HepG2 (cell line): ENCODE measurements at regions of chr1 and their contacts with region 1.

Region 1: DNA sequence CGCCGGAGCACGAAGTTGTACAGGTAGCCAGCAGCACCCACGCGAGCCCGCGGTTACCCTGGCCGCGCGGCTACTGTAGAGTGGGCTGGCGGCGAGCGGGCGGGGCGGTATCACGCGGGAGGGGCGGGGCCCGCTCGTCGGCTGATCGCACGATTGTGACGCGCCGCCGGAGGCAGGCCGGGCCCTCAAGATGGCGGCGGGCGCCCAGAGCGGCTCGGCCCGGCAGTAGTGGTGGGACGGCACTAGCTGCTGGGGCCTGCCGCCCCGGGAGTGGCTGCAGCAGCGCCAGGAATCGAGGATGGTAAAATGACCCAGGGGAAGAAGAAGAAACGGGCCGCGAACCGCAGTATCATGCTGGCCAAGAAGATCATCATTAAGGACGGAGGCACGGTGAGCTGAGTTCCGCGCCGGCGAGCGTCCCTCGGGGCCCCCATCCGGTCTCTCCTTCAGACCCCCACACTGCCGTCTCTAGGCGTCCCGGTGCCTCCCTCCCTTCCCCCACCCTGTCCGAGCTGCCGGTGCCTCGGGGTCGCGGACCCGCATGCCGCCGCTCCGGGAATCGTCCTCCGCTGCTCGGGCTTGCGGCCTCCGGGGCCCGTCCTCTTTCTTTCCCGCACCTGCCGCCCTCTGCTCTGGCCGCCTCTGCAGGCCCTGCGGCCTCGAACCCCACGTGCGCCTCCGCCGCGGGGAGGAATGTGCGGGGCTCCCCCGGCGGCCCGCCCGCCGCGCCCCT is 68.3 kb downstream of the SLC35A3 start:
- DNase-seq: peak; percentile 57
- ATAC-seq: peak; percentile 93
- H3K4me3 ChIP-seq: peak overlapping the region; percentile 91 to 99 (median 97)
- H3K27ac ChIP-seq: peak overlapping the region; percentile 94
- H3K4me1 ChIP-seq: peaks cover 58% of the 10 kb centered on the region
- H3K27me3 ChIP-seq: no peaks in the 10 kb centered on the region; a peak in 1 of 5 replicates
- CTCF ChIP-seq: no peak
- EP300 ChIP-seq: peak in 1 of 2 experiments; percentile 6; a peak in 1 of 4 replicates
- POLR2A ChIP-seq: peak; percentile 94 to 97
- RAD21 ChIP-seq: 0 out of 2 replicates have a peak, but pooled peaks have one; percentile 13

Region 2: GRCh38 chr1:99691175-99691574 is 346.9 kb before region 1 on chr1:
- CTCF ChIA-PET with region 1: no interaction called
- POLR2A ChIA-PET with region 1: no interaction called
- in situ Hi-C with region 1: no loop called
- intact Hi-C with region 1: no loop called
- DNase-seq: no peak
- ATAC-seq: no peak
- H3K4me3 ChIP-seq: no peak overlapping the region
- H3K27ac ChIP-seq: no peak overlapping the region
- H3K4me1 ChIP-seq: no peaks in the 10 kb centered on the region
- H3K27me3 ChIP-seq: no peaks in the 10 kb centered on the region
- CTCF ChIP-seq: no peak
- EP300 ChIP-seq: no peak
- POLR2A ChIP-seq: no peak
- RAD21 ChIP-seq: no peak

Region 3: DNA sequence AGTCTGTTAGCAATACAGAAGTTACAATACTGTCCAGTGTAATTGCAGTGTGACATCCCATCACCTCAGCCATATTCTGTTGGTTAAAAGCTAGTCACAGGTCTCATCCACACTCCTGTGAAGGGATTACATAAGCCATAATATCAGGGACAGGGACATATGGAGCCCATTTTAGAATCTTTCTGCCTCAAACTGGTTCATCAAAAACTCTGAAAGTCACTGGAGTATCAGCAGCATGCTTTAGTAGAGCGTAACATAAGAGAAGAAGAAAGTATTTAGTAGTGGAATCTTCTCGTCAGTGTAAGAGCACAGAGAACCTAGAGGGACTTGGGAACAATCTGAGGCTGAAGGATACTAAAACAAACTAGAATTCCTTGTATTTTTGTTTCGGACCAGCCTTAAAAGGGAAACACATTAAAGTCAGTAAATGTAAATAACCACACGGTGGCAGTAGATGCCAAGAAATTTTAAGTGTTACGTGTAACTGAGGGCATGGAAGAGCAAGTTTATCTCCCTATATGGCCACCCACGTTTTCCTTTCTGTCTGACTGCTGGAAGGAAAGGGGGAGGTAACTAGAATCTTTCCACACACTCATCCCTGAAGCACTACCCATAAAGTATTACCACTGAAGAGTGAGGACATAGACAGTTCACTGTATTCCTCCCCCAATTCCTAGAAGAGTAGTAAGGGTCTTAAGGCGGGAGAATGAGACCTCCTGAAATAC is 229.5 kb before region 1 on chr1:
- CTCF ChIA-PET with region 1: interaction called, 9 read pairs
- POLR2A ChIA-PET with region 1: no interaction called
- in situ Hi-C with region 1: loop called (anchors 5 kb)
- intact Hi-C with region 1: loop called (anchors 1 kb)
- DNase-seq: peak; percentile 81
- ATAC-seq: peak; percentile 95
- H3K4me3 ChIP-seq: peak overlapping the region; percentile 17 to 30 (median 24); a peak in 2 of 6 replicates
- H3K27ac ChIP-seq: no peak overlapping the region
- H3K4me1 ChIP-seq: peaks cover 13% of the 10 kb centered on the region; the same call in 1 of the 2 replicates
- H3K27me3 ChIP-seq: no peaks in the 10 kb centered on the region
- CTCF ChIP-seq: peak; percentile 85
- EP300 ChIP-seq: no peak
- POLR2A ChIP-seq: no peak
- RAD21 ChIP-seq: peak; percentile 81

Region 4: DNA sequence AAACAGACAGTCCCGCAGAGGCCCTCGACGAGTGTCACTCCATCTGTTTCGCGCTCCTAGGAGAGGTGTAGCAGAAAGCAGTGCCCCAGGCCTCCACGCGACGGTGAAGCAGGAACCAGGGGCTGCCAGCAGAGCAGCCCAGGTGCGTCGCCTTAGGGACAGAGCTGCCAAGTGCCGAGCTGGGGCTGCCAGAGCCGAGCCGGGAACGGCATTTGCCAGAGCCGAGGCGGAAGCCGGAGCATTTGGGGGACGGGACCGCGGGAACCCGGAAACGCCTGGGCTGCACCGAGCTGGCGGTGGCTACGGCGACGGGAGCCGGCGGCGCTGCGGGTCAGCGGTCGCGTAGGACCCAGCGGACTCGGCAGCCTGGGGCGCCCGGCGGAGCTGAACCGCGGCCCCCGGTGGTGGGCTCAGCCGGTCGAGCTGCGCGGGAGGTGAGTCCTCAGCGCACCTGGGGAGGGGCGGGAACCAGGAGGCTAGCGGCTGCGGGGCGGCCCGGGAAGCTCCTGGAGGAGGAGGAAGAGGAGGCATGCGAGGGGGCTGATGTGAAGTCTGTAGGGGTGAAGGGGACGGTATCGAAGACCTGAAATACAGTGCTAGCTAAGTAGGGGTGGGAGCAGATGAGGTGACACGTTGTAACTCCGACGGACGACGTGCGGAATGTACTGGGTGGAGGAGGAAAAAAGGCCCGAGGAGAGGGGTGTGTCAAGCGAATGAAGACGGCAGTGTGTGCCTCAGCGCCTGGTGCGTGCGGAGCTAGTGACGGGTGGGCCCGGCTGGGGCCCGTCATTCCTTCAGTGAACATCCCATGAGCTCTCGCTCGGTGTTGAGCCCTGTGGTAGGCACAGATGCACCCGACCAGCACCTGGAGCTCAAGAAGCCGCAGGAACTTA is 68.1 kb before region 1 on chr1 and contains the start of gene SLC35A3:
- CTCF ChIA-PET with region 1: no interaction called
- POLR2A ChIA-PET with region 1: interaction called, 25 read pairs
- in situ Hi-C with region 1: no loop called
- intact Hi-C with region 1: loop called (anchors 2 kb)
- DNase-seq: peak; percentile 74
- ATAC-seq: peak; percentile 97
- H3K4me3 ChIP-seq: peak within 1 kb of the TSS; percentile 79 to 97 (median 95)
- H3K27ac ChIP-seq: peak within 1 kb of the TSS; percentile 86
- H3K4me1 ChIP-seq: peaks cover 28% of the 10 kb centered on the region; the same call in 1 of the 2 replicates
- H3K27me3 ChIP-seq: no peaks in the 10 kb centered on the region; a peak in 1 of 5 replicates
- CTCF ChIP-seq: peak; percentile 50
- EP300 ChIP-seq: peak in 1 of 2 experiments; percentile 29; a peak in 1 of 4 replicates
- POLR2A ChIP-seq: peak; percentile 72 to 75; a peak in 3 of 4 replicates
- RAD21 ChIP-seq: peak; percentile 63
- total RNA-seq, gene SLC35A3: 19.2 and 24.9 TPM in 2 replicates